ENCODE measurements at regions of chr7 and their contacts with region 1.

Region 1: GRCh38 chr7:36487756-36488336 is 98.2 kb downstream of the ANLN start:
- DNase-seq: peak; percentile 35
- H3K4me3 ChIP-seq: no peak overlapping the region
- H3K27ac ChIP-seq: no peak overlapping the region
- H3K4me1 ChIP-seq: no peaks in the 10 kb centered on the region
- H3K27me3 ChIP-seq: no peaks in the 10 kb centered on the region
- CTCF ChIP-seq: peak; percentile 59

Region 2: GRCh38 chr7:36670585-36671431 is 183.0 kb after region 1 on chr7:
- intact Hi-C with region 1: loop called (anchors 2 kb)
- DNase-seq: peak; percentile 82
- H3K4me3 ChIP-seq: no peak overlapping the region
- H3K27ac ChIP-seq: no peak overlapping the region
- H3K4me1 ChIP-seq: no peaks in the 10 kb centered on the region
- H3K27me3 ChIP-seq: no peaks in the 10 kb centered on the region
- CTCF ChIP-seq: peak; percentile 87

Region 3: DNA sequence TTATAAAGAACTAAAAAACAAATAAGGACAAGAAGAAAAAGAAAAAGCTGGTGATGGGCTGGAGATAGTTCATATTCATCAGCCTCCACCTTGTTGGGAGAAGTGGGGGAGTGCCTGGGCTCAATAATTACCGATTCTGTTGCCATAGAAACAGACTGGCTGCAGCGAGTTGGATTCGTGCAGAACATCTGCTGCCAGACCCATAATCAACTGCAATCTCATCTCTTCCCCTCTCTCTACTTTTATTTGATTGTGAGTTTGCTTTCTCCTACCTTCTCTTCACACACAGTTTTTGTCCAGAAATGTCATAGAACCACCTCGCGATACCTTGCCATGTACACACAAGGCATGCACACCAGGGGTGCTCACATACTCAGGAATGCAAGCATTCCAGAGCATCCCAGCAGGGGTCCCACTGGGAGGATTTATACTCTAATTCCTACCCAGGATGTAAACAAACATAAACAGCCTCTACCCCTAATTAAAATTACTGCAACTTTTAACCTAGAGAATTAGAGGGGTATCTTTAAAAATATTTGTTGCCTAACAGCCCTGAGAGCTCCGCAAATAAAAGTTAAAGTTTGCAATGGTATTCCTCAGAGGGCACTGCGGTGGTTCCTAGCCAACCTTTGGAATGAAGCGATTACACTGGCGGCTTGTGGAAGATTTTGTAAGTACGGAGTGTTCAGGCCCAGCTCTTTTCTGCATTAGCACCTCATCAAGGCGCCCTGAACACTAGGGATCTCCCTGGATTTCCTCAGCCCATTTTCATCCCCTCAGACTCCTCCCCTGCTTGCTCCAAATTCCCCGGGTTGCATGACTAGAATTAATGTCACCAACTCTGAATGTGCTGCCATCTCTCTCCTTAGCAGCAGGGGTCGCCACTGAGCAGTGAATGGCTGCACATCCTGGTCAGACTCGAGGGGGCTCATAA is 498.9 kb after region 1 on chr7:
- intact Hi-C with region 1: loop called (anchors 10 kb)
- DNase-seq: peak; percentile 67
- H3K4me3 ChIP-seq: no peak overlapping the region
- H3K27ac ChIP-seq: no peak overlapping the region
- H3K4me1 ChIP-seq: no peaks in the 10 kb centered on the region
- H3K27me3 ChIP-seq: no peaks in the 10 kb centered on the region
- CTCF ChIP-seq: peak; percentile 56